ENCODE measurements at regions of chr4 and their contacts with region 1.

Region 1: DNA sequence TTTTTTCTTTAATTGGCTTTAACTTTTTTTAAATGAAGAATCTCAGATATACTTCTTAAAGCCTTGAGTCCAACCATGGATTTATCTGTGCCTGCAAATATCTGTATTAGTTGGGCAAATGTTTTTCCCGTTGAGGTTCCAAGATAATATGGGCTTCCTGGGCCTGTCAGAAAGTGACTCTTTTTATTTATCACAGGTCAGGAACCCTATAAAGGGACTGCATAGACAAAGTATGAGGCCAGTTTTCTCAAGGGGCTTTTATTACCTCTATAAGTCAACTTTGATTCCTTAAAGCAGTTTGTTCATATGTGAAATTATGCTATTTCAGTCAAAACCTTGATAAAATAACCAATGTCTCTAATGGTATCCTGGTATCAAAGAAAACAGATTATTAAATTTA is 80.2 kb upstream of the BMP2K start:
- DNase-seq: no peak
- H3K4me3 Mint-ChIP-seq: no peak overlapping the region
- H3K27ac Mint-ChIP-seq: no peak overlapping the region
- H3K4me1 Mint-ChIP-seq: peaks cover 12% of the 10 kb centered on the region
- H3K27me3 Mint-ChIP-seq: peaks cover 7% of the 10 kb centered on the region

Region 2: GRCh38 chr4:78737035-78737434 is 41.1 kb after region 1 on chr4:
- intact Hi-C with region 1: no loop called
- DNase-seq: no peak
- H3K4me3 Mint-ChIP-seq: no peak overlapping the region
- H3K27ac Mint-ChIP-seq: no peak overlapping the region
- H3K4me1 Mint-ChIP-seq: peaks cover 4% of the 10 kb centered on the region
- H3K27me3 Mint-ChIP-seq: no peaks in the 10 kb centered on the region

Region 3: GRCh38 chr4:79576429-79576753 is 880.5 kb after region 1 on chr4:
- intact Hi-C with region 1: loop called (anchors 5 kb)
- DNase-seq: no peak
- H3K4me3 Mint-ChIP-seq: no peak overlapping the region
- H3K27ac Mint-ChIP-seq: no peak overlapping the region
- H3K4me1 Mint-ChIP-seq: no peaks in the 10 kb centered on the region
- H3K27me3 Mint-ChIP-seq: peaks cover 13% of the 10 kb centered on the region